Ascending aorta (tissue), 2 donors: ENCODE measurements at regions of chr16 and their contacts with region 1.

Region 1: DNA sequence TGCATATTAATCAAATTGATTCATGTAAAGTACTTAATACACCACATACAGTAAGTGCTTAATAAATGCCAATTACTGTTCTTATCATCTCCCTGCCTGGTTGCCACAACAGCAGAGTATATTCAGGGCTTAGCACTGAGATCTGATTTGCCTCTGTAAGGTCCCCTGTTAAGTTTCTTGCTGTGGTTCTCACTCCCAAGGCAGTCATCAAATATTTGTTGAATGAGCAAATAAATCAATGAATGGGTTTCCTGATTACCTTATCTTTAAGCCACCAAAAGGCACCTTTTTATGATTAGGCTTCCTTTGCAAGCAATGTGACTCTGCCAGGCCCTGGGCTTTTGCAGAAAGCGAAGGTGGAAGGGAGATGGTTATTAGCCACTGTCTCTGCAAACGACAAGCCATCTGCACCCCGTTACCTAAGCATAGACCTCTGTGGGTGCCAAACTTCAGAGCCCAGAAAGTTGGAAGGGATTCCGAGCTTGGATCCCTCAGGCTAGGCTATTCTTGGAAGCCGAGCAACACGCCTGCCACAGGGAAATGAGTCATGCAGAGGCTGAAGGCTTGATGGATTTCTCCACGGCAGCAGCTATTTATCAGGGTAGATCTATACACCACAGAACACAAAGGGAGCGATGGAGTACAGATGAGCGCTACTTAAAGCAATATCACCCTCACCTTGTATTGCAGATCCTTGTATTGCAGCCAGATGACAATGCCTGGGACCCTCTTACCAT is 102.0 kb downstream of the GRIN2A start:
- DNase-seq: peak; percentile 16 to 79
- H3K4me3 ChIP-seq: no peak overlapping the region
- H3K27ac ChIP-seq: peak overlapping the region in 1 of 2 donors; percentile 55
- H3K4me1 ChIP-seq: peaks cover 0 to 17% of the 10 kb centered on the region in 2 donors
- H3K27me3 ChIP-seq: no peaks in the 10 kb centered on the region
- CTCF ChIP-seq: no peak

Region 2: GRCh38 chr16:10122546-10122945 is 42.3 kb after region 1 on chr16:
- intact Hi-C with region 1: loop called (anchors 5 kb)
- DNase-seq: no peak
- H3K4me3 ChIP-seq: peak overlapping the region; percentile 10 to 42
- H3K27ac ChIP-seq: peak overlapping the region in 1 of 2 donors; percentile 2
- H3K4me1 ChIP-seq: peaks cover 10 to 28% of the 10 kb centered on the region in 2 donors
- H3K27me3 ChIP-seq: no peaks in the 10 kb centered on the region
- CTCF ChIP-seq: peak; percentile 9 to 39 (median 17)

Region 3: DNA sequence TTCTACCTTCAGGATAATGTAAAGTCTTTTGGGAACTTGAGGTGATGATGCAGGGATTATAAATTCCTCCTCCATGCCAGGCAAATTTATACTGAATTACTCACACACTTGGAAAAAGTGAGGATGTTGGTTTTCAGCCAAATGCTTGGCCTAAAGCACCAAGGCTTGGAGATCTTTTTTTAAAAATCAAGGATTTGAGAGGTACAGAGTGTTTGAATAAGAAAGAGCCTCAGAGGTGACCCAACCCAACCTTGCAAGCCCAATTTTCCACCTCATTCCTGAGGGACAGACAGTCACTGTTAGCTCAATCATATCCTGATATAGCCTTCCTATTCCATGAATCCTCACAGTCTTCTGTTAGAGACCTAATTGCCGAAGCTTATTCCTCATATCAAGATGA is 88.1 kb after region 1 on chr16:
- intact Hi-C with region 1: loop called (anchors 5 kb)
- DNase-seq: no peak
- H3K4me3 ChIP-seq: no peak overlapping the region
- H3K27ac ChIP-seq: peak overlapping the region; percentile 63 to 70
- H3K4me1 ChIP-seq: peaks cover 0 to 3% of the 10 kb centered on the region in 2 donors
- H3K27me3 ChIP-seq: no peaks in the 10 kb centered on the region
- CTCF ChIP-seq: no peak